H1 (cell line): ENCODE measurements at regions of chr12 and their contacts with region 1.

Region 1: DNA sequence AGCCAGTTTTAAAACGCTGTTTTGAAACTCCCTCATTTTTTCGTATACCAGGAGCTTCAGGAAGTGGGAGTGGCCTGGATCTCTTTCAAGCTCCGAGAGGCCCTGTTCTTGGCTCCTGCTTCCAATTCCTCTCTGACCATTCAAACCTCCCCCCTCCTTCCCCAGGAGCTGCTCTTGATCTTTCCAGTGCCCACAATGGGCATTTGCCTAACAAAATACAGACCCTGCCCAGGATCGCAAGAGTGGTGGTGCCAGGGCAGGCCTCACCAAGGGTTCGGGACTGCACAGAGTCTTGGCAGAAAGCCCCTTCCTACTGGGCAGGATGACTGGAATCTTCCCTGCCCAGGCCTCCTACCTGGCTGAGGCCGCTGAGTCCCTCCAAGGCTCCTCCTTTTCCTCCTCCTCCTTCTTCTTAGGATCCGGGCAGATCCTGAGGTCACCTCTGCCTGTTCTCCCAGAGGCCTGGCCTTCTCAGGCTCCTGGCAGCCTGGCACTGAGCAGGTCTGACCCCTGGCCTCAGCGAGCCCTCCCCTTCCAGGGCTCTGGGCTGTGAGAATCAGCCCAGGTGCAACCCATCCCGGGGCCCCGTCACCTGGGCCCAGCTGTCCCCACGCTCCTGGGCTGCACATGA is 46.9 kb upstream of the NOS1 start:
- DNase-seq: peak in 1 of 2 experiments; percentile 56
- H3K4me3 ChIP-seq: no peak overlapping the region
- H3K27ac ChIP-seq: no peak overlapping the region
- H3K4me1 ChIP-seq: peaks cover 0 to 11% (median 4%) of the 10 kb centered on the region in 4 experiments; a peak in 5 of 7 replicates
- H3K27me3 ChIP-seq: no peaks in the 10 kb centered on the region
- CTCF ChIP-seq: no peak
- EP300 ChIP-seq: no peak
- POLR2A ChIP-seq: no peak
- RAD21 ChIP-seq: no peak

Region 2: GRCh38 chr12:117427211-117427610 is 18.9 kb after region 1 on chr12:
- CTCF ChIA-PET with region 1: interaction called, 17 read pairs
- POLR2A ChIA-PET with region 1: no interaction called
- DNase-seq: no peak
- H3K4me3 ChIP-seq: no peak overlapping the region
- H3K27ac ChIP-seq: no peak overlapping the region
- H3K4me1 ChIP-seq: no peaks in the 10 kb centered on the region
- H3K27me3 ChIP-seq: no peaks in the 10 kb centered on the region
- CTCF ChIP-seq: no peak
- EP300 ChIP-seq: no peak
- POLR2A ChIP-seq: no peak
- RAD21 ChIP-seq: no peak

Region 3: DNA sequence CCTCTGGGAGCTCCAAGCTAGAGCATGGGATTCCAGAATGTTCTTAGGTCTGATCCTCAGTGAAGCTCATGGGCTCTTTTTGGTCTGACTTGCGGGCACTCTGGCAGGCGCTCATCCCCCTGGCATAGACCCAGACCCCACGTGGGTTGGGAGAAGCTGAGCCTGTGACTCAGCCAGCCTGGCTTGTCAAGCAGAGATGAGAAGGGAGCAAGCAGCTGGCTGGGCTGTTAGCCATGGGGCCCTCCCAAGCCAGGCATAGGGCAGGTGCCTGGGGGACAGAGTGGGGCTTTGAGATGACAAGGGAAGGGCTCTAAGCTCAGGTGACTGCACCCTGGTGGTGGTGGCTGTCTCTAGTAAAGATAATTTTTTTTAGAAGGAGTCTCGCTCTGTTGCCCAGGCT is 33.5 kb after region 1 on chr12:
- CTCF ChIA-PET with region 1: interaction called, 11 read pairs
- POLR2A ChIA-PET with region 1: no interaction called
- DNase-seq: no peak
- H3K4me3 ChIP-seq: no peak overlapping the region
- H3K27ac ChIP-seq: no peak overlapping the region
- H3K4me1 ChIP-seq: peaks cover 0 to 5% (median 0%) of the 10 kb centered on the region in 4 experiments; a peak in 2 of 7 replicates
- H3K27me3 ChIP-seq: no peaks in the 10 kb centered on the region
- CTCF ChIP-seq: peak in 1 of 3 experiments; percentile 11; a peak in 1 of 4 replicates
- EP300 ChIP-seq: no peak
- POLR2A ChIP-seq: no peak
- RAD21 ChIP-seq: no peak